Activated naive CD4-positive, alpha-beta T cell treated with anti-CD3 and anti-CD28 coated beads for 36 hours (primary cell): ENCODE measurements at regions of chr6 and their contacts with region 1.

Region 1: GRCh38 chr6:154683756-154684523 is 49.3 kb upstream of the SCAF8 start:
- DNase-seq: no peak
- H3K4me3 Mint-ChIP-seq: no peak overlapping the region
- H3K27ac Mint-ChIP-seq: no peak overlapping the region
- H3K4me1 Mint-ChIP-seq: peaks cover 14% of the 10 kb centered on the region
- H3K27me3 Mint-ChIP-seq: no peaks in the 10 kb centered on the region

Region 2: GRCh38 chr6:154773610-154774089 is 89.7 kb after region 1 on chr6:
- CTCF ChIA-PET with region 1: no interaction called
- intact Hi-C with region 1: loop called (anchors 1 kb)
- DNase-seq: peak; percentile 19
- H3K4me3 Mint-ChIP-seq: no peak overlapping the region
- H3K27ac Mint-ChIP-seq: peak overlapping the region; percentile 70
- H3K4me1 Mint-ChIP-seq: peaks cover 43% of the 10 kb centered on the region
- H3K27me3 Mint-ChIP-seq: no peaks in the 10 kb centered on the region